K562 (cell line): ENCODE measurements at regions of chr15 and their contacts with region 1.

Region 1: DNA sequence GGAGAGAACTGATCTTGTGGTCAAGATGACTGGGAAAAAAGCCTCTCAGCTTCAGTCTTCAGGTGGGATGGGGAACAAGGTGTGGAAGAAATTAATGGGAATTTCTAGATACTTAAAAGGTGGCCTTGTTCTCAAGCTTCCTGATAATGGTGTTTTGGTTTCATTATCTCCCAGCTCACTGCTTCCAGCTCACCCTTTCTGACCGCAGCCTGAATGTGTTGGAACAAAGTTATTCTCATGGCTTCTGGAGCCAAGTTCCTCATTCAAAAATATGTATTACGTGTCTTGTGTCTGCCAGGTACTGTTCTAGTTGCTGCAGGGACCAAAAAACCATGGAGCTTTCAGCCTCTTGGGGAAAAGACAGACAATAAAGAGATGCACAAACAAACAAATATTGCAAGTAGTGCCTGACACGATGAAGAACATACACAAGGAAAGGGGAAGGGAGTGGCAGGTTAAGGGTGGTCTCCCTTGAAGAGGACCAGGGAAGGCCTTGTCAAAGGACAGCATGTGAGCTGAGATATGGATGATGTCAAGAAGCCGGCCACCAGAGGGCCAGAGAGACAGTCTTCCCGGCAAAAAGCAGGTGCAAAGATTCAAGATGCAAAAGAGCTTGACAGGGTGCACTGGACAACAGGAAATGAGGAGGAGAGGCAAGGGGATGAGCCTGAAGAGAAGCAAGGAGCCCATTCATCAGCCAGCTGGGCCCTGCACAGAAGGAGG is 35.5 kb downstream of the ARRDC4 start:
- DNase-seq: peak in 2 of 4 experiments; percentile 18 to 40
- ATAC-seq: peak; percentile 71
- H3K4me3 ChIP-seq: no peak overlapping the region
- H3K27ac ChIP-seq: no peak overlapping the region
- H3K4me1 ChIP-seq: no peaks in the 10 kb centered on the region; a peak in 1 of 5 replicates
- H3K27me3 ChIP-seq: peaks cover 0 to 18% of the 10 kb centered on the region in 2 experiments; a peak in 1 of 5 replicates
- CTCF ChIP-seq: peak; percentile 23 to 45 (median 37); a peak in 2 of 6 replicates
- EP300 ChIP-seq: no peak
- POLR2A ChIP-seq: no peak
- RAD21 ChIP-seq: peak in 1 of 2 experiments; percentile 32; a peak in 1 of 4 replicates

Region 2: GRCh38 chr15:98085003-98085639 is 89.1 kb after region 1 on chr15:
- CTCF ChIA-PET with region 1: no interaction called
- POLR2A ChIA-PET with region 1: no interaction called
- in situ Hi-C with region 1: no loop called
- intact Hi-C with region 1: loop called (anchors 10 kb)
- DNase-seq: peak in 2 of 4 experiments; percentile 40 to 72
- ATAC-seq: 0 out of 3 replicates have a peak, but pooled peaks have one; percentile 48
- H3K4me3 ChIP-seq: no peak overlapping the region
- H3K27ac ChIP-seq: no peak overlapping the region
- H3K4me1 ChIP-seq: no peaks in the 10 kb centered on the region; a peak in 1 of 5 replicates
- H3K27me3 ChIP-seq: no peaks in the 10 kb centered on the region
- CTCF ChIP-seq: peak; percentile 37 to 75 (median 54); a peak in 5 of 6 replicates
- EP300 ChIP-seq: no peak
- POLR2A ChIP-seq: no peak
- RAD21 ChIP-seq: peak; percentile 74 to 86

Region 3: GRCh38 chr15:98347001-98347400 is 351.0 kb after region 1 on chr15:
- CTCF ChIA-PET with region 1: no interaction called
- POLR2A ChIA-PET with region 1: no interaction called
- in situ Hi-C with region 1: no loop called
- intact Hi-C with region 1: no loop called
- DNase-seq: no peak
- ATAC-seq: no peak
- H3K4me3 ChIP-seq: no peak overlapping the region
- H3K27ac ChIP-seq: no peak overlapping the region
- H3K4me1 ChIP-seq: no peaks in the 10 kb centered on the region
- H3K27me3 ChIP-seq: no peaks in the 10 kb centered on the region
- CTCF ChIP-seq: no peak
- EP300 ChIP-seq: no peak
- POLR2A ChIP-seq: no peak
- RAD21 ChIP-seq: no peak